Caki2 (cell line): ENCODE measurements at regions of chr1 and their contacts with region 1.

Region 1: DNA sequence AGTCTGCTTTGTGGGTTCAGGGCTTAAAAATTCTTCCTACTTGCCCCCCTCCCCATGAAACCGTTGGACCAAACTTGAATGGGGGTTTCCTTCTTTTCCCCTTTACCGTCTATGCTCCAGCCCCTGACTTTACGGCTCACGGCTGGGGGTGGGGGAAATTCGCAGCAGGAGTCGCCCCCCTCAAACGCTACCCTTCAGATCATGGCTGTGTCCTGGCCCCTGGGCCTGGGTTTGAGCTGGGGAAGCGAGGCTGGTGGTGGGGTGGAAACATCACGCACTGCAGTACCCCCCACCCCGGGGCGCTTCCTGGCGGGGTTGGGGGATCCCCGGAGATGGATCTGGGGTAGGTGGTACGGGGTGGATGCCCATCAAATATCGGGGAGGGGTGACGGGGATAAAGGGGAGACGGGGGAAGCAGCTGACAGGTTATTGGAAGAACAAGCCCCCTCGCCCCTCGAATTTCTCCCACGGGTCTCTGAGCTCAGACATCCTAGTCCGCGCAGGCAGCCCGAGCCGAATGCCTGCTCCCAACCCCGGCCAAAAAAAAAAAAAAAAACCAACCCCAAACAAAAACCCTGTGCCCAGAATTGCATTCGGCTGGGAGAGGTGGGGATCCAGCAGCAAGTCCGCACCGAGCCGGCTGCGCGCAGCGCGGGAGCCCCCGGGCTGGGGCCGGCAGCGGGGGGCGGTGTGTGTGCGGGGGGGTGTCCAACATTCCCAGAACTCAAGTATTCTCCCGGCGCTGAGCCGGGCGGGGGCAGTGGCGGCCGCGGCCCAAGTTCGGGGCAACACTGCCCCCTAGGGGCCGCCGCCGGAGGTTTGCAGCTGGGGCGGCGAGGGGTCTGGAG is 59.0 kb upstream of the ACOT11 start:
- DNase-seq: peak; percentile 74

Region 2: DNA sequence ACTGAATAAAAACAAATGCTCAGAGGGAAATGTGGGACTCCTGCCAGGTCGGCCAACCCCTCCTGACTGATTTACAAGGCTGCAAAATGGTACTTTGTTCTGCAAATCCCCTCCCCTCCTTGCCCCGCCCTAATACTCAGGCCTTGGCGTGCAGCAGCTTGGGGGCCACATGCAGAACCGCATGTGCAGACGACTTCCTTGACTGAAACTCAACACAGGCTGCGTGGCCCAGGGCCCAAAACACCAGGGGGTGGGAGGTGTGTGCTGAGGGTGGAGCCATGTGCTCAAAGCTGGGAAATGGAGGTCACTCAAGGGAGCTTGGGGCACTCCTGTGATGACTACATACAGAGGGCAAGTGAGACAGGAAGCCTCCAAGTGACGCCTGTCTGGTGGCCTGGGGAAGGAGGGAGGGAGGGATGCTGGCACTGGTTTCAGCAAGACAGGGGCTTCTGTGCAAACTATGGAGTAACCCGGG is 201.8 kb before region 1 on chr1:
- in situ Hi-C with region 1: loop called (anchors 25 kb)
- DNase-seq: peak; percentile 44